Activated B cell treated with CpG ODN at 0.5 μM for 24 hours (primary cell): ENCODE measurements at regions of chr1 and their contacts with region 1.

Region 1: GRCh38 chr1:167220537-167221125 is at the start of gene POU2F1:
- DNase-seq: peak; percentile 97
- ATAC-seq: peak; percentile 70
- H3K4me3 Mint-ChIP-seq: peak within 1 kb of the TSS; percentile 93
- H3K27ac Mint-ChIP-seq: peak within 1 kb of the TSS; percentile 89
- H3K4me1 Mint-ChIP-seq: peaks cover 37% of the 10 kb centered on the region
- H3K27me3 Mint-ChIP-seq: no peaks in the 10 kb centered on the region
- CTCF ChIP-seq: no peak
- total RNA-seq, gene POU2F1: 30.5 and 35.5 TPM in 2 replicates

Region 2: GRCh38 chr1:166432655-166433054 is 788.0 kb before region 1 on chr1:
- CTCF ChIA-PET with region 1: no interaction called
- POLR2A ChIA-PET with region 1: no interaction called
- intact Hi-C with region 1: no loop called
- DNase-seq: no peak
- ATAC-seq: no peak
- H3K4me3 Mint-ChIP-seq: no peak overlapping the region
- H3K27ac Mint-ChIP-seq: no peak overlapping the region
- H3K4me1 Mint-ChIP-seq: no peaks in the 10 kb centered on the region
- H3K27me3 Mint-ChIP-seq: peaks cover 1% of the 10 kb centered on the region
- CTCF ChIP-seq: no peak

Region 3: GRCh38 chr1:166875734-166876539 is 344.7 kb before region 1 on chr1 and contains the start of gene TADA1:
- CTCF ChIA-PET with region 1: no interaction called
- POLR2A ChIA-PET with region 1: interaction called, 6 read pairs
- intact Hi-C with region 1: loop called (anchors 1 kb)
- DNase-seq: peak; percentile 94
- ATAC-seq: peak; percentile 93
- H3K4me3 Mint-ChIP-seq: peak within 1 kb of the TSS; percentile 96
- H3K27ac Mint-ChIP-seq: peak within 1 kb of the TSS; percentile 98
- H3K4me1 Mint-ChIP-seq: peaks cover 30% of the 10 kb centered on the region
- H3K27me3 Mint-ChIP-seq: no peaks in the 10 kb centered on the region
- CTCF ChIP-seq: no peak
- total RNA-seq, gene TADA1: 13.6 and 15.3 TPM in 2 replicates

Region 4: GRCh38 chr1:166889776-166890175 is 330.9 kb before region 1 on chr1:
- CTCF ChIA-PET with region 1: no interaction called
- POLR2A ChIA-PET with region 1: no interaction called
- intact Hi-C with region 1: no loop called
- DNase-seq: no peak
- ATAC-seq: no peak
- H3K4me3 Mint-ChIP-seq: no peak overlapping the region
- H3K27ac Mint-ChIP-seq: no peak overlapping the region
- H3K4me1 Mint-ChIP-seq: peaks cover 2% of the 10 kb centered on the region
- H3K27me3 Mint-ChIP-seq: peaks cover 22% of the 10 kb centered on the region
- CTCF ChIP-seq: no peak

Region 5: GRCh38 chr1:167066333-167067122 is 154.1 kb before region 1 on chr1:
- CTCF ChIA-PET with region 1: interaction called, 13 read pairs
- POLR2A ChIA-PET with region 1: interaction called, 3 read pairs
- intact Hi-C with region 1: loop called (anchors 1 kb)
- DNase-seq: peak; percentile 76
- ATAC-seq: peak; percentile 94
- H3K4me3 Mint-ChIP-seq: no peak overlapping the region
- H3K27ac Mint-ChIP-seq: no peak overlapping the region
- H3K4me1 Mint-ChIP-seq: no peaks in the 10 kb centered on the region
- H3K27me3 Mint-ChIP-seq: no peaks in the 10 kb centered on the region
- CTCF ChIP-seq: peak; percentile 70

Region 6: GRCh38 chr1:167276969-167277368 is 56.3 kb after region 1 on chr1:
- CTCF ChIA-PET with region 1: no interaction called
- POLR2A ChIA-PET with region 1: no interaction called
- intact Hi-C with region 1: no loop called
- DNase-seq: no peak
- ATAC-seq: no peak
- H3K4me3 Mint-ChIP-seq: no peak overlapping the region
- H3K27ac Mint-ChIP-seq: no peak overlapping the region
- H3K4me1 Mint-ChIP-seq: peaks cover 39% of the 10 kb centered on the region
- H3K27me3 Mint-ChIP-seq: no peaks in the 10 kb centered on the region
- CTCF ChIP-seq: no peak

Region 7: DNA sequence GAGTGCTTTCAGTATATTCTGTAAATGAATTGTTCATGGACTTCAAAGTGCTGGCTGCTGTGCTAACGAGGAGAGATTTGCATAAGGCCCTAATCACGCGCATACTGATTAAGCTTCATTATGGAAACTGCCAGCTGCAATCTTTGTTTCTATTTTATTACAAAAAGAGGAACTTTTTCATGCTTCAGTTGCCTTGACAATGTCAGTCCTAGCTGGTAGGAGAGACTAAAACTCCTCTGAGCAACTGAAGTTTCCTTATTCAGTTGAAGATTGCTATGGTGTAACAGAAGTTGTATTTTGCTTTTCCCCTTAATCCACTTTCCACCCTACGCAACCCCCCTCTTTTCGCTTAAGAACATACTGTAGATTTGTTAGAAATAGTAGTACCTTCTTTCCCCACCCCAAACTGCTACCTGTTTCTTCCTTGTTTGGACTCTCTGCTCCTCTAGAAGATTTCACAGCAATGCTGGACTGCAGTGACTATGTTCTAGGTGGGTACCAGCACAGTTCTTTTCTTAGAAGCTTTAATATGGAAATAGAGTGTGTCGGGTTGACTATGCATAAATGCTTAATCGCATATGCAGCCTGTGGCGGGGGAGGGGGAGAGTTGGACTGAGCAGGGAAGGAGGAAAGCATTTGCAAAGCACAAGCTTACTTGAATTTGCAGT is 108.3 kb after region 1 on chr1:
- CTCF ChIA-PET with region 1: interaction called, 7 read pairs
- POLR2A ChIA-PET with region 1: interaction called, 51 read pairs
- intact Hi-C with region 1: loop called (anchors 1 kb)
- DNase-seq: peak; percentile 33
- ATAC-seq: peak; percentile 80
- H3K4me3 Mint-ChIP-seq: peak overlapping the region; percentile 84
- H3K27ac Mint-ChIP-seq: peak overlapping the region; percentile 97
- H3K4me1 Mint-ChIP-seq: peaks cover 65% of the 10 kb centered on the region
- H3K27me3 Mint-ChIP-seq: no peaks in the 10 kb centered on the region
- CTCF ChIP-seq: no peak

Region 8: GRCh38 chr1:167553136-167554027 is 332.8 kb after region 1 on chr1 and contains the start of gene CREG1:
- CTCF ChIA-PET with region 1: interaction called, 4 read pairs
- POLR2A ChIA-PET with region 1: interaction called, 7 read pairs
- intact Hi-C with region 1: loop called (anchors 1 kb)
- DNase-seq: peak; percentile 84
- ATAC-seq: peak; percentile 99
- H3K4me3 Mint-ChIP-seq: peak within 1 kb of the TSS; percentile 86
- H3K27ac Mint-ChIP-seq: peak within 1 kb of the TSS; percentile 41
- H3K4me1 Mint-ChIP-seq: peaks cover 19% of the 10 kb centered on the region
- H3K27me3 Mint-ChIP-seq: no peaks in the 10 kb centered on the region
- CTCF ChIP-seq: no peak
- total RNA-seq, gene CREG1: 3.1 and 3.8 TPM in 2 replicates

Region 9: GRCh38 chr1:168164771-168165170 is 944.1 kb after region 1 on chr1:
- CTCF ChIA-PET with region 1: no interaction called
- POLR2A ChIA-PET with region 1: no interaction called
- intact Hi-C with region 1: no loop called
- DNase-seq: no peak
- ATAC-seq: no peak
- H3K4me3 Mint-ChIP-seq: no peak overlapping the region
- H3K27ac Mint-ChIP-seq: no peak overlapping the region
- H3K4me1 Mint-ChIP-seq: peaks cover 19% of the 10 kb centered on the region
- H3K27me3 Mint-ChIP-seq: peaks cover 7% of the 10 kb centered on the region
- CTCF ChIP-seq: no peak

Region 10: GRCh38 chr1:168178638-168179437 is 958.2 kb after region 1 on chr1 and contains the start of gene TIPRL:
- CTCF ChIA-PET with region 1: no interaction called
- POLR2A ChIA-PET with region 1: interaction called, 6 read pairs
- intact Hi-C with region 1: loop called (anchors 2 kb)
- DNase-seq: peak; percentile 92
- ATAC-seq: peak; percentile 88
- H3K4me3 Mint-ChIP-seq: no peak within 1 kb of the TSS
- H3K27ac Mint-ChIP-seq: no peak within 1 kb of the TSS
- H3K4me1 Mint-ChIP-seq: peaks cover 2% of the 10 kb centered on the region
- H3K27me3 Mint-ChIP-seq: peaks cover 8% of the 10 kb centered on the region
- CTCF ChIP-seq: no peak
- total RNA-seq, gene TIPRL: 25.5 and 29.8 TPM in 2 replicates